Right ventricle myocardium inferior (tissue), 1 donor: ENCODE measurements at regions of chr3 and their contacts with region 1.

Region 1: DNA sequence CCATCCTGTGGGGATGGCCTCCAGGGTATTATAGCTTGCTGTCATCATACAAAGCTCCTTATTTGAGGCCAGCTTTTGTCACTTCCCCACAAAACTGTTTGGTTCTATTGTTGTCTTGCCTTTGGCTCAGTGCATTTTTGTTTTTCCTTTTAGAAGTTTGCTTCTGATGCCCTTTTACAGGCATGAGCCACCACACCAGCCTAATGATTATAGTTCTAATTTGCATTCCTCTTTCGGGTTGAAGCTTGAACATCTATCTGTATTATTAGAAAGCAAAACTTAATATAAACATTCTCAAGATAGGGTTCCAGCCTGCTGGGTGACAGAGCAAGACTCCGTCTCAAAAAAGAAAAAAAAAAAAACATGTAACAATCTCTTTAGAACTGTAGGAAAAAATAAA is 39.8 kb downstream of the SMARCC1 start:
- DNase-seq: no peak
- ATAC-seq: no peak

Region 2: GRCh38 chr3:47781685-47782445 is 39.9 kb after region 1 on chr3 and contains the start of gene SMARCC1:
- intact Hi-C with region 1: loop called (anchors 2 kb)
- DNase-seq: peak; percentile 100
- ATAC-seq: peak; percentile 100
- total RNA-seq, gene SMARCC1: 29.1 TPM